HCT116 (cell line): ENCODE measurements at regions of chr5 and their contacts with region 1.

Region 1: DNA sequence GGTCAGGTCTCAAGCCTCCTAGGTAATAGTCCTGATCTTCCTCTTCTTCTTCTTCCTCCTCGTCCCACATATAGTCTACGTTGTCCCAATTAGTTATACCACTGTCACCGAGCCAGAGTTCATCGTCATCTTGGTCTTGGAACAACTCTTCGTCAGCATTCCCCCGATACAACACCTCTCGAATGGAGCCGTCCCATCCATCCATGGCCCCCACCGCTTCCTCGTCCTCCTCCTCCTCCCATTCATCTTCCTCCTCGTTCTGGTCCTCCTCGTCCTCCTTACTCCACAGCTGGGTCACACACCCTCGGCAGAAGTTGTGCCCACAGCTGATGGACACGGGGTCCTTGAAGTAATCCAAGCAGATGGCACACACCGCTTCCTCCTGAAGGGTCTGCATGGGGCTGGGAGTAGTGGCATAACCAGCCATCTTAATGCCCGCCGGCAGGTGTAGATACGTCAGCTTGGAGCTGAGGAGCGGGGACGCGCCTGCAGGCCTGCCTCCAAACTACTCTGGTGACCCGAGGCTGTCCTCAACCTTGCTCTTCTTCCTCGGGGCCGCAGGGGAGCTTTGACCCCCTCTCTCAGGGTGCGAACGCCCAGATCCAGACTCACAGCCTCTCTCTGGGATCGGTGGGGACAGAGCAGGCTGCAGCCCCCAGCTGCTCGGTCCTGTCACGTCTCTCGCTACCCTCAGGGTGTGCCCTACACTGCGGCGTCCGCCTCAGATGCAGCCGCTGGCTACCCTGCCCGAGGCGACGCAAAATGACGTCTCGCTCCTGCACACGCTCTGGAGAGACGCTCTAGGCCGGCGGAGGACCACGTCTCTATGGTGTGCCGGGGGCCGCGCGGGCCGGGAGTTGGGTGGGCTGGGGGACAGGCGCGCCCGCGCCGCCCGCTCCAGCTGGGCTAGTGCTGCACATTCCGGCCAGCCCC is at the start of gene TRIM52:
- DNase-seq: peak; percentile 89
- ATAC-seq: peak; percentile 84
- H3K4me3 ChIP-seq: peak within 1 kb of the TSS; percentile 83 to 96
- H3K27ac ChIP-seq: peak within 1 kb of the TSS; percentile 97
- H3K4me1 ChIP-seq: peaks cover 12 to 21% of the 10 kb centered on the region in 2 experiments; a peak in 3 of 4 replicates
- H3K27me3 ChIP-seq: no peaks in the 10 kb centered on the region
- CTCF ChIP-seq: no peak
- POLR2A ChIP-seq: peak; percentile 64
- RAD21 ChIP-seq: no peak
- total RNA-seq, gene TRIM52: 7.6 TPM

Region 2: DNA sequence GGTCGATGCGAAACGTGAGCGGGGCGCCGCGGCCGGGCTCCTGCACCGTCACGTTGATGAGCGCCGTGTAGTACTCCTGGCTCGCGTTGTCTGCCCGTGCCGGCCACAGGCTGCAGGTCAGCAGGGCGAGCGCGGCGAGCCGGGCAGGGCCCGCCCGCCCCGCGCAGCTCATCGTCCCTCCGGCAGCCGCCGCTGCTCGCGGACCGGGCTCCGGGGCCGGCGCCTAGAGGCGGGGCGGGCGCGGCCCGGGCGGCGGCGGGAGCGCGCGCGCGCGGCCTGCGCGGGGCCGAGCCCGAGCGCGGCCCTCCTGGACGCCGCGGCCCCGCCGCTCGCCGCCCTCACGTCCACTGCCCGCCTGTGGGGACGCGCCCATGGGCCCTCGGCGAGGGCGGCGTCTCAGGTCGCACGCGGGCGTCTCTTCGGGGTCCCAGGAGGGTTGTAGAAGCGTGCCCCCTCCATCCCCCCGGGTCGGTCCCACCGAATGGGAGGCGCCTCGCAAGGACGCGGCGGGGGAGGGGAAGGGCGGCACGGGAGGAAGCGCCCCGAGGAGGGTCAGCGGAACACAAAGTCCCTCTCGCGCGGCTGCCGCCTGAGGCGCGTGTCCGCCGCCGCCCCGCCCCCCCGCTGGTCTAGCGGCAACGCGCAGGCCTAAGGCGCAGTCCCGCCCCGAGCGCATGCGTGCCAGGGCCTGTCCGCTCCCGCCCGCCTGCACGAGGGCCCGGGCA is 1189.0 kb before region 1 on chr5 and contains the start of gene RNF130:
- CTCF ChIA-PET with region 1: no interaction called
- POLR2A ChIA-PET with region 1: no interaction called
- RAD21 ChIA-PET with region 1: no interaction called
- intact Hi-C with region 1: no loop called
- DNase-seq: peak; percentile 77
- ATAC-seq: peak; percentile 81
- H3K4me3 ChIP-seq: peak within 1 kb of the TSS; percentile 61 to 79
- H3K27ac ChIP-seq: peak within 1 kb of the TSS; percentile 79
- H3K4me1 ChIP-seq: peaks cover 6 to 25% of the 10 kb centered on the region in 2 experiments; a peak in 3 of 4 replicates
- H3K27me3 ChIP-seq: no peaks in the 10 kb centered on the region
- CTCF ChIP-seq: no peak
- POLR2A ChIP-seq: peak; percentile 45
- RAD21 ChIP-seq: no peak
- total RNA-seq, gene RNF130: 34.9 TPM

Region 3: GRCh38 chr5:181181650-181182565 is 78.7 kb before region 1 on chr5:
- CTCF ChIA-PET with region 1: no interaction called
- POLR2A ChIA-PET with region 1: no interaction called
- RAD21 ChIA-PET with region 1: no interaction called
- intact Hi-C with region 1: loop called (anchors 5 kb)
- DNase-seq: peak; percentile 76
- ATAC-seq: peak; percentile 91
- H3K4me3 ChIP-seq: no peak overlapping the region
- H3K27ac ChIP-seq: peak overlapping the region; percentile 18; the same call in 1 of the 2 replicates
- H3K4me1 ChIP-seq: peaks cover 10 to 31% of the 10 kb centered on the region in 2 experiments
- H3K27me3 ChIP-seq: no peaks in the 10 kb centered on the region
- CTCF ChIP-seq: peak in 2 of 3 experiments; percentile 84 to 88; a peak in 4 of 6 replicates
- POLR2A ChIP-seq: no peak
- RAD21 ChIP-seq: no peak

Region 4: GRCh38 chr5:181217803-181218062 is 42.9 kb before region 1 on chr5:
- CTCF ChIA-PET with region 1: no interaction called
- POLR2A ChIA-PET with region 1: interaction called, 4 read pairs
- RAD21 ChIA-PET with region 1: no interaction called
- intact Hi-C with region 1: loop called (anchors 1 kb)
- DNase-seq: no peak
- ATAC-seq: no peak
- H3K4me3 ChIP-seq: no peak overlapping the region
- H3K27ac ChIP-seq: peak overlapping the region; percentile 19; the same call in 1 of the 2 replicates
- H3K4me1 ChIP-seq: peaks cover 12 to 48% of the 10 kb centered on the region in 2 experiments
- H3K27me3 ChIP-seq: no peaks in the 10 kb centered on the region
- CTCF ChIP-seq: no peak
- POLR2A ChIP-seq: no peak
- RAD21 ChIP-seq: no peak

Region 5: GRCh38 chr5:181243512-181244343 is 16.9 kb before region 1 on chr5 and contains the start of gene RACK1:
- CTCF ChIA-PET with region 1: interaction called, 4 read pairs
- POLR2A ChIA-PET with region 1: interaction called, 11 read pairs
- RAD21 ChIA-PET with region 1: no interaction called
- intact Hi-C with region 1: no loop called
- DNase-seq: peak; percentile 81
- ATAC-seq: peak; percentile 66
- H3K4me3 ChIP-seq: peak within 1 kb of the TSS; percentile 88 to 92
- H3K27ac ChIP-seq: peak within 1 kb of the TSS; percentile 96
- H3K4me1 ChIP-seq: peaks cover 24 to 46% of the 10 kb centered on the region in 2 experiments
- H3K27me3 ChIP-seq: no peaks in the 10 kb centered on the region
- CTCF ChIP-seq: no peak
- POLR2A ChIP-seq: peak; percentile 77
- RAD21 ChIP-seq: no peak
- total RNA-seq, gene RACK1: 2,432 TPM